Naive thymus-derived CD4-positive, alpha-beta T cell (primary cell): ENCODE measurements at regions of chr11 and their contacts with region 1.

Region 1: DNA sequence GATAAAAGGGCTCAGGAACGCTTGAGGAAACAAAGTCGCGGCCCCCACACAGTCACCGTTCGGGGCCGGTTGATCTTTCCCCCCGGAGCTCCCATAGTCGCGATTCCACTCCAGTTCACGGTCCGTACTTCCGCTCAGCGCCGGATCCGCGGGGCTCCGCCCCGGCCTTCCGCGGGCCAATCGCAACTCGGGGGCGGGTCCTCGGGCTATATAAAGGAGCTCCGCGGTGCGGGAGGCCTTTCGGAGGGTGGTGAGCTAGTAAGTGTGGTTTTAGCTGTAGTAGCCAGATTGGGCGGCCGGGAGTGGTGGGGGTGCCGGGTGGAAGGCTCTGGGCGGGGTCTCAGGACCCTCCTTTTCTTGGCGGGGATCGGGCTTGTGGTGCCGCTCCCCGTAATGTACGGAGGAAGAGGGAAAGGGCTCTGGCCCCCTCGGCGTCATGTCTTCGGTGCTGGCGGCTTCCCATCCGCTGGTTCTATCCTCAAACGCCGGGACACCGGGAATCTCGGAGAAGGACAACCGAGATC is at the starts of genes C11orf98 and CSKMT:
- DNase-seq: peak; percentile 90 to 99 (median 95)
- ATAC-seq: peak; percentile 97
- H3K4me3 ChIP-seq: peak within 1 kb of the TSS; percentile 85
- H3K4me3 Mint-ChIP-seq: peak within 1 kb of the TSS; percentile 93 to 98 (median 96)
- H3K27ac ChIP-seq: peak within 1 kb of the TSS; percentile 85
- H3K27ac Mint-ChIP-seq: peak within 1 kb of the TSS; percentile 89 to 97 (median 93)
- H3K4me1 ChIP-seq: peaks cover 16 to 21% of the 10 kb centered on the region in 2 donors
- H3K4me1 Mint-ChIP-seq: peaks cover 13 to 45% (median 32%) of the 10 kb centered on the region in 7 donors
- H3K27me3 ChIP-seq: no peaks in the 10 kb centered on the region
- H3K27me3 Mint-ChIP-seq: no peaks in the 10 kb centered on the region
- total RNA-seq, gene C11orf98: 23.2 to 103 (median 47.6) TPM
- total RNA-seq, gene CSKMT: 8.9 to 29.3 (median 23.7) TPM

Region 2: DNA sequence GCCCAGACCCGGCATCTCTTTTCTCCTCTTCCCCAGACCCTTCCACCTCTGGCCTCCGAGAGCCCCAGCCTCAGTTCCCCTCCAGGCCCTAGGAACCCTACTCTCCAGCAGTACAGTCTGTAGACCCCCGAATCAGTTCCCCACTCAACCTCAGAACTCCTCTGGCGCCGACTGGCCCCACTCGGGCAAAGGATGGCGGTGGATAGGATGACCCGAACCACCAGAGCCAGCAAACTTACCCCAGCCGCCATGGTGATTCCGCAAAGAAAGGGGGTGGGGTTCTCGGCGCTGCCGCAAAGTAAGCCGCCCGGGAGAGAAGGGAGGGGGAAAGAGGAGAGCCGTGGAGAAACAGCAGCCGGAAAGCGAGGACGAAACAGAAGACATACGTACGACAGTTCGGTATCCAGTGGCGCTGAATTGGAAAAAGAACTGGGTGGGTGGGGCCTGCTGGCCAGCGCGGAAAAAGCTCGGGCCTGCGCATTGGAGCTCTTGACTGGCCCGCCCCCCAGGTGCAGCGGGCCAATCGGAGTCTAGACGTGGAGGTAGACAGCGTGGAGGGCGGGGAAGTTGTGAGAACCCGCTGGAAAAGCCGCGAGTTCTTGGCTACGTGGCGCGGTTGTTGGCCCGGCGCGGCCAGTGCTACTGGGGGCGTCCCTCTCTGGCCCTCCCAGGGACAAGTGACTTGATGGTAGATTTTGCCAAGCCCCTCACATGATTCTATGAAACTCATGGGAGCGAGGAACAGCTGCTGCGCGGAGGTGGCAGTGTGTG is 91.4 kb before region 1 on chr11 and contains the start of gene EEF1G:
- CTCF ChIA-PET with region 1: no interaction called
- POLR2A ChIA-PET with region 1: interaction called, 14 read pairs
- intact Hi-C with region 1: no loop called
- DNase-seq: peak; percentile 88 to 100 (median 99)
- ATAC-seq: peak; percentile 96
- H3K4me3 ChIP-seq: peak within 1 kb of the TSS; percentile 82
- H3K4me3 Mint-ChIP-seq: peak within 1 kb of the TSS; percentile 94 to 100 (median 97)
- H3K27ac ChIP-seq: peak within 1 kb of the TSS; percentile 88
- H3K27ac Mint-ChIP-seq: peak within 1 kb of the TSS; percentile 81 to 98 (median 95)
- H3K4me1 ChIP-seq: peaks cover 8 to 11% of the 10 kb centered on the region in 2 donors
- H3K4me1 Mint-ChIP-seq: peaks cover 39 to 61% (median 45%) of the 10 kb centered on the region in 7 donors
- H3K27me3 ChIP-seq: no peaks in the 10 kb centered on the region
- H3K27me3 Mint-ChIP-seq: no peaks in the 10 kb centered on the region
- total RNA-seq, gene EEF1G: 1,186 to 2,550 (median 2,338) TPM

Region 3: DNA sequence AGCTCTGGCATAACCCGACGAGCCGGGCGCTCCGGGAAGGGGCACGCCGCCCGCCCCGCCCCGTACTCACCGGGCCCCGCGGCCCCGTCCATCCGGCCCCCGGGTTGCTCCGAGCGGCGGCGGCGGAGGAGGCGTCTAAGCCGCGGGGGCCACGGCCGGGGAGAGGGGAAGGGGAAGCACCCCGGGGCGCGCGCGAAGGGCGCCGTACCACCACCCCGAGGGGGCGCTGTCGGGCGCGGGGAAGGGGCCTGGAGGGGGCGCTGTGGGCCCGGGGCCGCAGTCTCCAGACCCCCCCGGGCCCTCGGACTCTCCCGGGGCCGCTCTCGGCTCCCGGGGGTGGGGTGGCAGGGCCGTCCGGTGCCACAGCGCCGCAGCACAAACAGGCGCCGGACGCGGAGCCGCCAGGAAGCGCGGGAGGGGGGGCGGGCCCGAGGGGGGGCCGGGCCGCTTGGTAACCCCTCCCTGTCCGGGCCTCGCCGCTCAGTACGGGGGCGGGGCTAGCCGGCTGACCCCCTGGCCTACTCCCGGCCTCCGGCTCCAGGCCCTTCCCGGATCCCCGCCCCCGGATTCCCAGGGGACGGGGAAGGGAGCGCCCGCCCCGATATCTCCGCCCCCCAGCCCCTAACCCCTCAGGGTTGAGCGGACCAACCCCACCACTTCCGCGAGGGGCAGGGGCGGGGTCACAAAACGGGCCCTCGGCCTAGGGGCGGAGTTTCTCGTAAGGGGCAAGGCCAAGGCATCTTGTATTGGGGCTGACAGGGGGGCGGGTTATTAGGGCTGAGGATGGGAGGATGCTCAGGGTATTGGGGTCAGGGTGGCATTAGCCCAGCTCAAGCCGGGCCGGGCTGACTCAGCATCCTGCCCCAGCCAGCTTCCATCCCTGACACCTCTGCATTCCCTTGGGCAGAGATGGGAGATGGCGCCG is 52.5 kb before region 1 on chr11 and contains the starts of genes EML3 and ROM1:
- CTCF ChIA-PET with region 1: interaction called, 5 read pairs
- POLR2A ChIA-PET with region 1: interaction called, 94 read pairs
- intact Hi-C with region 1: loop called (anchors 1 to 2 kb)
- DNase-seq: peak; percentile 74 to 96 (median 83)
- ATAC-seq: peak; percentile 90
- H3K4me3 ChIP-seq: peak within 1 kb of the TSS; percentile 99
- H3K4me3 Mint-ChIP-seq: peak within 1 kb of the TSS; percentile 89 to 100 (median 96)
- H3K27ac ChIP-seq: peak within 1 kb of the TSS; percentile 92
- H3K27ac Mint-ChIP-seq: peak within 1 kb of the TSS; percentile 93 to 100 (median 97)
- H3K4me1 ChIP-seq: peaks cover 19 to 32% of the 10 kb centered on the region in 2 donors
- H3K4me1 Mint-ChIP-seq: peaks cover 31 to 56% (median 48%) of the 10 kb centered on the region in 7 donors
- H3K27me3 ChIP-seq: no peaks in the 10 kb centered on the region
- H3K27me3 Mint-ChIP-seq: no peaks in the 10 kb centered on the region
- total RNA-seq, gene EML3: 152 to 209 (median 188) TPM
- total RNA-seq, gene ROM1: 1.2 to 2.4 (median 2.0) TPM

Region 4: GRCh38 chr11:62627714-62628113 is 37.4 kb before region 1 on chr11:
- CTCF ChIA-PET with region 1: interaction called, 3 read pairs
- POLR2A ChIA-PET with region 1: interaction called, 332 read pairs
- intact Hi-C with region 1: loop called (anchors 1 kb)
- DNase-seq: no peak
- ATAC-seq: peak; percentile 46
- H3K4me3 ChIP-seq: no peak overlapping the region
- H3K4me3 Mint-ChIP-seq: no peak overlapping the region
- H3K27ac ChIP-seq: no peak overlapping the region
- H3K27ac Mint-ChIP-seq: peak overlapping the region in 5 of 9 donors; percentile 20 to 83 (median 67)
- H3K4me1 ChIP-seq: no peaks in the 10 kb centered on the region
- H3K4me1 Mint-ChIP-seq: peaks cover 0 to 24% (median 3%) of the 10 kb centered on the region in 7 donors
- H3K27me3 ChIP-seq: no peaks in the 10 kb centered on the region
- H3K27me3 Mint-ChIP-seq: no peaks in the 10 kb centered on the region

Region 5: DNA sequence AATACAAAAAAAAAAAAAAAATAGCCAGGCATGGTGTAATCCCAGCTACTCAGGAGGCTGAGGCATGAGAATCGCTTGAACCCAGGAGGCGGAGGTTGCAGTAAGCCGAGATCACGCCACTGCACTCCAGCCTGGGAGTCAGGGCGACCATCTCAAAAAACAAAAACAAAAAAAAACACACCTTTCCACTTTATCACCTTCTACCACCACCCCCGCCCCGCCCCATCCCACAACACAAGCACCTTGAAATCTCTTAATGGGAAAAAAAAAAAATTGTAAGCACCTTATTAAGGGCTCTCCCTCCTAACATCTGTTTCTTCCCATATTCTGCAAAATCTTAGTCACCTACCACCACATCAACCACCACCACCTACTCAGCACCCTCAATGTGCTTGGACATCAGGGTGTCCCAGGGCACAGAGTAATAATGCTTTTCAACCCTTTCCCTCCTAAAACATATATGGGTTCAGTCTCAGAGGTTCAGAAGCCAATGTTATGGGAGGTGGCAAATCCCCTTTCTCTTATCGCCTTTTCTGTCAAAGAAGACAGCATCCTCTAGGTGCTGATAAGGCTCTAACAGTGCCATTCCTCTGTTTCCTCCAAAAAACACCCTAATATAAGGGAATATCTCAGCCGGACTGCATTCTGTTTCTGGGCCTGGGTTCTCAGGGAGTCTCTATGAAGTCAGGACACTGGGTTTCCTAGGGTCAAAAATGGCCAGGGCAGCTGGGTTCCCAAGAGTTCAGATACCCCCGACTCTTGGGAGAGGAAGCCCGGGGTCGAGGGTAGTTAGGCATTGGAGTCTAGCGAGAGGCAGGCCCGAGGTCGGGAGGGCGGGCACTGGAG is 12.8 kb before region 1 on chr11:
- CTCF ChIA-PET with region 1: interaction called, 10 read pairs
- POLR2A ChIA-PET with region 1: interaction called, 332 read pairs
- intact Hi-C with region 1: loop called (anchors 1 kb)
- DNase-seq: peak in 4 of 9 donors; percentile 13 to 59 (median 22)
- ATAC-seq: no peak
- H3K4me3 ChIP-seq: peak overlapping the region; percentile 87
- H3K4me3 Mint-ChIP-seq: peak overlapping the region; percentile 75 to 94 (median 90)
- H3K27ac ChIP-seq: peak overlapping the region; percentile 95
- H3K27ac Mint-ChIP-seq: peak overlapping the region; percentile 88 to 98 (median 96)
- H3K4me1 ChIP-seq: peaks cover 13 to 16% of the 10 kb centered on the region in 2 donors
- H3K4me1 Mint-ChIP-seq: peaks cover 11 to 36% (median 22%) of the 10 kb centered on the region in 7 donors
- H3K27me3 ChIP-seq: no peaks in the 10 kb centered on the region
- H3K27me3 Mint-ChIP-seq: no peaks in the 10 kb centered on the region

Region 6: GRCh38 chr11:62694455-62695167 is 29.5 kb after region 1 on chr11:
- CTCF ChIA-PET with region 1: interaction called, 3 read pairs
- POLR2A ChIA-PET with region 1: interaction called, 4 read pairs
- intact Hi-C with region 1: loop called in 1 of 2 experiments (anchors 1 kb)
- DNase-seq: peak; percentile 50 to 80 (median 70)
- ATAC-seq: peak; percentile 93
- H3K4me3 ChIP-seq: no peak overlapping the region
- H3K4me3 Mint-ChIP-seq: peak overlapping the region in 1 of 10 donors; percentile 14
- H3K27ac ChIP-seq: no peak overlapping the region
- H3K27ac Mint-ChIP-seq: peak overlapping the region in 5 of 9 donors; percentile 1 to 78 (median 18)
- H3K4me1 ChIP-seq: peaks cover 0 to 6% of the 10 kb centered on the region in 2 donors
- H3K4me1 Mint-ChIP-seq: peaks cover 0 to 8% (median 6%) of the 10 kb centered on the region in 7 donors
- H3K27me3 ChIP-seq: no peaks in the 10 kb centered on the region
- H3K27me3 Mint-ChIP-seq: no peaks in the 10 kb centered on the region

Region 7: DNA sequence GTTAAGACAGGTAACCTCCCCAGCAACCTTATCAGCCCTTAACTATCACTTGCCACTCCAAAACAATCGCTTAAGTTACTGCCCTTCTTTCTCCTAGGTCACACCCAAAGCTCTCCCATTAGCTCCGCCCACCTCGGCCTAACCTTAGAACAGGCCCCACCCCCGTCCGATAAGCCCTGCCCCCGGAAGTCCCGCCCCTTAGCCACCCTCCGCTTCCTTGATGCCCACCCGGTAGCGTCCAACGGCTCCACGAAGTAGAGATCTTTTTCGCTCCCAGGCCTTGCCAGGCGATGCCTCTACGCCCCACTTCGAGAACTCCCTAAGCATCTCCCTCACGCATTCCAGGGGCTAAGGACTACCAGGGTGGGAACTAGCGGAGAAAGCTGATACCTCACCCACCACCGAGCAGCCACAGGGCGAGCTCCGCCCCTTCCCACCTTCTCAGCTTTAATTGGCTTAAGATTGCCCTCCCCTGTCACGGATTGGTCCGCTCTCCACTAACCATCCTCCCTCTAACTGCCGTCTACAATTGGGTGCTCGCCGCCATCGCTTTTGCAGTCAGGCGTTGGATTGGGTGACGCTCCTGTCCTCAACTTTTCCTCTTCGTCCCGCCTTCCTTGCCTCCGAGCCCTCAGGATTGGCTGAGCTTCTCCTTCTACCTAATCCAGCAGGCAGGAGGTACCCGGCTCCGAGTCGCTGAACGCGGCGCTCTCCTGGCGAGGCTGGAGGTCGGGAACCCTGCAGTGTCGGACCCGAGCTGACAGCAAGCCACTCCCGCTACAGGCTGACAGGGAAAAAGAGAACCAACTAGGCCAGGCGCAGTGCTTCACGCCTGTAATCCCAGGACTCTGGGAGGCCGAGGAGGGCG is 88.8 kb after region 1 on chr11 and contains the start of gene ZBTB3:
- CTCF ChIA-PET with region 1: no interaction called
- POLR2A ChIA-PET with region 1: interaction called, 15 read pairs
- intact Hi-C with region 1: no loop called
- DNase-seq: peak; percentile 89 to 99 (median 98)
- ATAC-seq: peak; percentile 96
- H3K4me3 ChIP-seq: peak within 1 kb of the TSS; percentile 94
- H3K4me3 Mint-ChIP-seq: peak within 1 kb of the TSS; percentile 86 to 100 (median 98)
- H3K27ac ChIP-seq: peak within 1 kb of the TSS; percentile 83
- H3K27ac Mint-ChIP-seq: peak within 1 kb of the TSS; percentile 93 to 99 (median 95)
- H3K4me1 ChIP-seq: peaks cover 15 to 16% of the 10 kb centered on the region in 2 donors
- H3K4me1 Mint-ChIP-seq: peaks cover 9 to 41% (median 29%) of the 10 kb centered on the region in 7 donors
- H3K27me3 ChIP-seq: no peaks in the 10 kb centered on the region
- H3K27me3 Mint-ChIP-seq: no peaks in the 10 kb centered on the region
- total RNA-seq, gene ZBTB3: 6.4 to 24.1 (median 19.0) TPM